A549 (cell line): ENCODE measurements at regions of chr3 and their contacts with region 1.

Region 1: GRCh38 chr3:27134165-27134796 is 234.9 kb downstream of the NEK10 start:
- DNase-seq: peak; percentile 43 to 75
- ATAC-seq: peak; percentile 89 to 98
- H3K4me3 ChIP-seq: no peak overlapping the region
- H3K27ac ChIP-seq: no peak overlapping the region
- H3K4me1 ChIP-seq: peaks cover 16% of the 10 kb centered on the region; the same call in 2 of the 3 replicates
- CTCF ChIP-seq: peak; percentile 92
- EP300 ChIP-seq: no peak
- POLR2A ChIP-seq: no peak
- RAD21 ChIP-seq: peak; percentile 94 to 98

Region 2: DNA sequence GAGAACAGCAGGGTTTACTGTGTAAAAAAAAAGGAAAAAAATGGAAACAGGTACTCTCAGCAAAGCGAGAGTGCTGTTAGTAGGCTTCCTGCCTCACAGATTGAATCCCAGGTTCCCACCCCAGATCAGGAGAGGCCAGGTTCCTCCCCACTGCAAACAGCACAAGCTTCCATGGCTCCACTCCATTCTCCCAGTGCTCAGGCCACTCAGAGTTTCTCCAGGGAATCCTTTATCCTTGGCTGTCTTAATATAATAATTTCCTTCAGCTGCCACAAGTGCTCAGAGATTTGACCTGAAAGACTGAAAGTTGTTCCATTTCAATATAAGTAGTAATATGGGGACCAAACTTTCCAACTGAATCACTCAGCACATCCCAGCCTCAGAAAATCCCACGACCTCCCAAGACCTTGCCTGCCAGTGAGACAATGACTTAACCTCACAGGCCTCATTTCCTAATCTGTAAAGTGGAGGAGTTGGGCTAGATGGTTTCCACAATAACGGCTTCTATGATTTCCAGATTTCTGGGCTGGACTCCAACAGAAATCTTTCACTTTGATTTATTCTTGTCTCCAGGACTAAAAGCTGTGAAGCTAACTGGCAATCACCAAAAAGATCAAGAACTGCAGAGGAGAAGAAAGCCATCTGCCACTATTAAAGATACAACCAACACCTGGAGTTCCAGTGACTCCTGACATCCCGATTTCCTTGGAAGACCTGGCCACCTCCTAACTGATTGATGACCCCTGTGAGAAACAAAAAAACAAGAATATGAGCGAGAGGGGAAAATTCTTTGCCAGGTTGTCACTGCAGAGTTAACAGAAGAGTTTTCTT is 54.6 kb before region 1 on chr3:
- CTCF ChIA-PET with region 1: no interaction called
- POLR2A ChIA-PET with region 1: no interaction called
- DNase-seq: no peak
- ATAC-seq: no peak
- H3K4me3 ChIP-seq: no peak overlapping the region
- H3K27ac ChIP-seq: no peak overlapping the region
- H3K4me1 ChIP-seq: no peaks in the 10 kb centered on the region
- CTCF ChIP-seq: no peak
- EP300 ChIP-seq: no peak
- POLR2A ChIP-seq: no peak
- RAD21 ChIP-seq: no peak

Region 3: GRCh38 chr3:27119639-27120038 is 14.6 kb before region 1 on chr3:
- CTCF ChIA-PET with region 1: interaction called, 13 read pairs
- POLR2A ChIA-PET with region 1: no interaction called
- DNase-seq: no peak
- ATAC-seq: no peak
- H3K4me3 ChIP-seq: no peak overlapping the region
- H3K27ac ChIP-seq: no peak overlapping the region
- H3K4me1 ChIP-seq: no peaks in the 10 kb centered on the region
- CTCF ChIP-seq: no peak
- EP300 ChIP-seq: no peak
- POLR2A ChIP-seq: no peak
- RAD21 ChIP-seq: no peak

Region 4: DNA sequence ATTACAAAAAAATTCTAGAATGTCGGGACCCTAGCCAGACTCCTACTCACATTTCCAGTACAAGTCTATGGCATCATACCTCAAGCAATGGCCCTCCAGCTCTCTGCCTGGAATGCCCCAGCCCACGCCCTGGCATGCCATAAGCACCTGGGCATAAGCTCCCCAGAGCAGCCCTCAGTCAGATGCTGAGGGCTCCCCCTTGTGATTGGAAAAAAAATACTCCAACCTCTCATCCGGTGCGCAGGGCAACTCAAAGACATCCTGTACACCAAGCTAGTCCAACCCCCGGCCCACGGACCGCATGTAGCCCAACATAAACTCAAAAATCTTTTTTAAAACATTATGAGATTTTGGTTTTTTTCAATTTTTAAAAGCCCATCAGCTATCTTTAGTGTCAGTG is 119.5 kb after region 1 on chr3:
- CTCF ChIA-PET with region 1: interaction called, 24 read pairs
- POLR2A ChIA-PET with region 1: no interaction called
- DNase-seq: peak; percentile 32 to 55
- ATAC-seq: peak; percentile 98 to 100
- H3K4me3 ChIP-seq: no peak overlapping the region
- H3K27ac ChIP-seq: no peak overlapping the region
- H3K4me1 ChIP-seq: no peaks in the 10 kb centered on the region
- CTCF ChIP-seq: peak; percentile 69
- EP300 ChIP-seq: no peak
- POLR2A ChIP-seq: no peak
- RAD21 ChIP-seq: peak; percentile 81 to 85